Activated CD4-positive, alpha-beta memory T cell treated with anti-CD3 and anti-CD28 coated beads, Interleukin-2, amount 10 ng/mL, durations not matched to agents 7 days and 5 days (primary cell): ENCODE measurements at regions of chr3 and their contacts with region 1.

Region 1: GRCh38 chr3:27357665-27358258 is 11.4 kb downstream of the NEK10 start:
- DNase-seq: peak; percentile 68
- H3K4me3 Mint-ChIP-seq: no peak overlapping the region
- H3K27ac Mint-ChIP-seq: peak overlapping the region; percentile 74
- H3K4me1 Mint-ChIP-seq: peaks cover 34% of the 10 kb centered on the region
- H3K27me3 Mint-ChIP-seq: peaks cover 3% of the 10 kb centered on the region

Region 2: DNA sequence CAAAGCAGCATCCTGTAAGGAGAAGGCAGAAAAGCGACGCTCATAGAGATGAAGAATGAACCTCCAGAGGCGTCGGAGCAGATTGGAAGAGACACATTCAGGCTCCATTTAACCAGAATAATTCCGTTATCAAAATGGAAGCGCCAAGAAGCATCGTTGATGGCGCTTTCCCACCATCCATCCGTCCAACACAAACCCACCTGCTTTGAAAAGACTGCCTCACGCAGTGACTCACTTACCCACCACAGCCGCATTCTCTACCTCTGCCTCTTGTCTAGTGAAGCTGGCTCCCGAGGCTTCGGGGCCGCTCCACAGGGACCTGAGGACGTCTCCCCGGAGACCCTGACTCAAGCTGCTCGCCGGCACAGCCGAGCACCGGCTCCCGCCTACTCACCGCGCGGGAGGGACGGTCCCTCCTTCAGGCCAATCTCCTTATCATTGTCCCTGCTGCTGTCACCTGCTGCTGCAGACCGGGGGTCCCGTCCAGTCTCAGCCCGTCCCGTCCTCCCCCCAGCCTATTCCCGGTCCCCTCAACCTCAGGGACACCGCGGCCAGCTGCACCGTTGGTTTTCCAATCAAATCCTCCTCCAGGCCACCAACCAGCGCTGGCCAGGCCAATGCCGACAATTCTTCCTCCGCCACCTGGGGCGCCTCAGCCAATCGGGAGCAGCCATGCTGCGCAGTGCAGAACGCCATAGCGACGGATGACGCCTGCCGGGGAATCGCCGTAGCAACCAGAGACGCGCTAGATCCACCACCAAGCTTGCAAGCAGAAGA is 11.3 kb after region 1 on chr3 and contains the start of gene NEK10:
- CTCF ChIA-PET with region 1: interaction called, 19 read pairs
- POLR2A ChIA-PET with region 1: interaction called, 4 read pairs
- DNase-seq: peak; percentile 92
- H3K4me3 Mint-ChIP-seq: peak within 1 kb of the TSS; percentile 93
- H3K27ac Mint-ChIP-seq: peak within 1 kb of the TSS; percentile 66
- H3K4me1 Mint-ChIP-seq: peaks cover 18% of the 10 kb centered on the region
- H3K27me3 Mint-ChIP-seq: peaks cover 3% of the 10 kb centered on the region
- total RNA-seq, gene NEK10: 0.35 to 0.86 TPM